Breast epithelium (tissue), 4 donors: ENCODE measurements at regions of chr16 and their contacts with region 1.

Region 1: GRCh38 chr16:9302072-9302471 is 210.6 kb downstream of the HAPSTR1 start:
- DNase-seq: no peak
- H3K4me3 ChIP-seq: no peak overlapping the region
- H3K27ac ChIP-seq: no peak overlapping the region
- H3K4me1 ChIP-seq: peaks cover 0 to 8% of the 10 kb centered on the region in 2 donors
- H3K27me3 ChIP-seq: no peaks in the 10 kb centered on the region
- CTCF ChIP-seq: no peak
- POLR2A ChIP-seq: no peak

Region 2: GRCh38 chr16:10485698-10486382 is 1183.8 kb after region 1 on chr16:
- intact Hi-C with region 1: loop called (anchors 5 kb)
- DNase-seq: no peak
- H3K4me3 ChIP-seq: no peak overlapping the region
- H3K27ac ChIP-seq: no peak overlapping the region
- H3K4me1 ChIP-seq: no peaks in the 10 kb centered on the region
- H3K27me3 ChIP-seq: no peaks in the 10 kb centered on the region
- CTCF ChIP-seq: no peak
- POLR2A ChIP-seq: no peak